ENCODE measurements at regions of chr11 and their contacts with region 1.

Region 1: DNA sequence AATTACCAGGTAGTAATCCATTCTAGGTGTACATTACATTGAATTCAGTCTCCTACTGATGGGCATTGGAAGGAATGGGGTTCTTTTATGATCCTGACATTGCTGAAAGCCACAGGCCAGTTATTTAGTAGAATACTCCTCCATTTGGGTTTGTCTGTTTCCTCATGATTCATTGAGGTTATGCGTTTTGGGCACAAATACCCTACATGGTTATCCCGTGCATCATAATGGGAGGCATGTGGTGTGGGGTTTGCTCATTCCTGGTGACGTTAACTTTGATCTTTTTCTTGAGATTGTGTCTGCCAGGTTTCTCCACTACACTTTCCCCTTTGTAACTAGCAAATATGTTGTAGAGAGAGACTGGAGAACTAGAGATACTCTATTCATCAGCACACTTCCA is 5.5 kb downstream of the FOLR3 start:
- DNase-seq: peak; percentile 69
- H3K4me3 ChIP-seq: no peak overlapping the region
- H3K27ac ChIP-seq: peak overlapping the region; percentile 80
- H3K27me3 ChIP-seq: no peaks in the 10 kb centered on the region
- CTCF ChIP-seq: no peak

Region 2: GRCh38 chr11:72030472-72031045 is 110.5 kb before region 1 on chr11:
- CTCF ChIA-PET with region 1: interaction called, 29 read pairs
- POLR2A ChIA-PET with region 1: no interaction called
- DNase-seq: no peak
- H3K4me3 ChIP-seq: no peak overlapping the region
- H3K27ac ChIP-seq: no peak overlapping the region
- H3K27me3 ChIP-seq: no peaks in the 10 kb centered on the region
- CTCF ChIP-seq: no peak

Region 3: DNA sequence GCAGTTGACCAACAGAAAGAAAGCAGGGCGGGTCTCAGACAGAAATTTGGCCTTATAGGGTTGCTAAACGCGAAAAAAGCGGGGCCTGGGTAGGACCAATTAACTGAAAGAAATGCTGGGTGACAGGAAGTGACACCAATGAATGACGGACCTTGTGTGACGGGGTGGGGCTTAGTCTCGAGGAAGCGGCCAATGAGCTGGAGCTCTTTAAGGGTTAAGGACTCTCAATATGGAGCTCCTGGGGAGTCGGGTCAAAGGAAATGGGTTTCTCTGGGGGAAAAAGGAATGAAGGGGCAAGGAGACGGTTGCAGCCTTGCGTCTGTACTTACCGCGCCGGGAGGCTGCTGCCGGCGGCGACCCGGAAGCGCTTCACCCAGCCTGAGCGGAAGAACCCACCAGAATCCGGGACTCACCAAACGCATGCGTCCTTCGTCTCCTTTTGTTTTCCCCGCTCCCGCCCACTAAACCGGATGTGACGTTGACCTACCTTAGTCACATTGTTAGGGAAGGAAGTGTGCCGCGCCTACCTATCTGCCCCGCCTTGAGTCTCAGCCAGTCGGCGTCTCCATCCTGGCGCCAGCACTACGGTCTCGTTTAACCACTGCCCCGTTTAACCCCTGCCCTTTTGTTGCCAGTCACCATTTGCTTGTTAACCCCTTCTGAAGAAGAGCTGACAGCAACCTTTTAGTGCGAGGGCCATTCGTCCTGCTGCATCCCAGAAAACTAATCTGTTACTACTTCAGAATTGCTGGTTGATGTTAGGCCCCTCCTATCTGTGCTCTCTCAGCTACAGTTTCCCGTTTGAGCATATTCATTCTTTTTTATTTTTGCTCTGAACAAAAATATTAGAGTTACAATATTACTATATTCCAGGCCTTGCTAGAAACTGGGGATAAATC is 28.5 kb before region 1 on chr11 and contains the start of gene ANAPC15:
- CTCF ChIA-PET with region 1: interaction called, 8 read pairs
- POLR2A ChIA-PET with region 1: interaction called, 12 read pairs
- DNase-seq: peak; percentile 99
- H3K4me3 ChIP-seq: peak within 1 kb of the TSS; percentile 87
- H3K27ac ChIP-seq: peak within 1 kb of the TSS; percentile 99
- H3K27me3 ChIP-seq: no peaks in the 10 kb centered on the region
- CTCF ChIP-seq: no peak
- polyA plus RNA-seq, gene ANAPC15: 45.7 and 54.5 TPM in 2 replicates

Region 4: GRCh38 chr11:72160319-72160718 is 19.3 kb after region 1 on chr11:
- CTCF ChIA-PET with region 1: interaction called, 24 read pairs
- POLR2A ChIA-PET with region 1: no interaction called
- DNase-seq: no peak
- H3K4me3 ChIP-seq: no peak overlapping the region
- H3K27ac ChIP-seq: no peak overlapping the region
- H3K27me3 ChIP-seq: no peaks in the 10 kb centered on the region
- CTCF ChIP-seq: no peak

Measured in AG04450 (cell line).